Activated CD4-positive, alpha-beta T cell treated with anti-CD3 and anti-CD28 coated beads, Interleukin-2, amount 10 ng/mL, durations not matched to agents 24 days and 14 days (primary cell): ENCODE measurements at regions of chr10 and their contacts with region 1.

Region 1: GRCh38 chr10:6647811-6648526 is 67.9 kb upstream of the PRKCQ start:
- DNase-seq: peak; percentile 91
- H3K4me3 Mint-ChIP-seq: no peak overlapping the region
- H3K27ac Mint-ChIP-seq: no peak overlapping the region
- H3K4me1 Mint-ChIP-seq: peaks cover 44% of the 10 kb centered on the region
- H3K27me3 Mint-ChIP-seq: no peaks in the 10 kb centered on the region

Region 2: GRCh38 chr10:6530211-6530840 is 117.6 kb before region 1 on chr10:
- intact Hi-C with region 1: no loop called
- DNase-seq: peak; percentile 94
- H3K4me3 Mint-ChIP-seq: peak overlapping the region; percentile 89
- H3K27ac Mint-ChIP-seq: peak overlapping the region; percentile 99
- H3K4me1 Mint-ChIP-seq: peaks cover 78% of the 10 kb centered on the region
- H3K27me3 Mint-ChIP-seq: no peaks in the 10 kb centered on the region

Region 3: GRCh38 chr10:6607778-6608177 is 40.2 kb before region 1 on chr10:
- intact Hi-C with region 1: loop called (anchors 2 kb)
- DNase-seq: no peak
- H3K4me3 Mint-ChIP-seq: no peak overlapping the region
- H3K27ac Mint-ChIP-seq: peak overlapping the region; percentile 91
- H3K4me1 Mint-ChIP-seq: peaks cover 61% of the 10 kb centered on the region
- H3K27me3 Mint-ChIP-seq: no peaks in the 10 kb centered on the region